ENCODE measurements at regions of chr1 and their contacts with region 1.

Region 1: DNA sequence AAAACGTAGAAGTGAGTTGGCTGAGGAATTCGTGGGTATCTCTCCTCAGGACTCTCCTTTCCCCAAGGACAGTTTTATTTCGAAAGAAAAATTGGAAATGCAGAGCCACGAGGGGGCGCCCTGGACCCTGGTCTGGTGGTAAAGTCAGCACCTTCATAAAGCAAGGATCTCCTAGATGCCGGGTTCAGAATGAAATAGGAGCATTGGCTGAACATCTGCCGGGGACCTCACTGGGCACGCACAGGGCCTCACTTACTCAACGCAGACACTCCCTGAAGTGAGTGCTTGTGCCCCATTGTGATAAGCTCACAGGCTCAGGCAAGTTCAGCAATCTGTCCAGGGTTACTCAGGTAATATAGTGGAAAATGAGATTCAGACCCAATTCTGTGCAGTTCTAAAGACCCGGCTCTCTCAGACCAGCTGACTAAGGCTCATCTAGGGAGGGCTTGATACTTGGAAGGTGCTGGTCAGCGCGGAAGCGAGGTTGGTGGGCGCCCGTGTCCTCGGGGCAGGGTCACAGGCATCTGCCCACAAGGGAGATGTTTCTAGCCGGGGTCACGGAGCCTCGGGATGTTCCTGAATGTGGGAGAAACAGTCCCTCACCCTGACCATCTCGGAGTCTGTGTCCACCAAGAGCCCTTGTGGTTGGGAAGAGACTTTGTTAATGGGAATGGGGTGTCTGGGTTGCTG is 55.7 kb upstream of the ETV3 start:
- DNase-seq: no peak
- H3K4me3 ChIP-seq: no peak overlapping the region
- CTCF ChIP-seq: peak; percentile 75

Region 2: DNA sequence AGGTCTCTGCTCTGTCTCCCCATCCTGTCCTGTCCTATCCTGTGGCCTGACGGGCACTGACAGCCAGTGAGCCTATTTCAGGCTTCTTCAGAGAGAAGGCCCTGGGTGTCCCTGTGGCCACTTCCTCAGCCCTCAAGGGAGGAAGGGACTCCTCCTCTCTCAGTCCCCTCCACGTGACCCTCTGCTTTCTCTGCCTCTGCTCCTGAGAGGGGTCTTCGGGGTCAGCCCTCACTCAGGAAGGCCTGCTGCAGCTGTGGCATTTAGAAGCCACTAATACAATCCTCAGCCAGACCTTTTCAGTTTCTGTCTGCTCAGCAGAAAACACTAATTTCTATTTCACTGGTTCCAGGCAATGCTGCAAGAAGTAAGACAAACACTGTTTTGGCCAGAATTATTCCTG is 12.1 kb before region 1 on chr1:
- CTCF ChIA-PET with region 1: interaction called, 11 read pairs
- POLR2A ChIA-PET with region 1: no interaction called
- DNase-seq: no peak
- H3K4me3 ChIP-seq: no peak overlapping the region
- CTCF ChIP-seq: no peak

Region 3: GRCh38 chr1:157496121-157496526 is 302.3 kb after region 1 on chr1:
- CTCF ChIA-PET with region 1: interaction called, 32 read pairs
- POLR2A ChIA-PET with region 1: no interaction called
- DNase-seq: no peak
- H3K4me3 ChIP-seq: no peak overlapping the region
- CTCF ChIP-seq: peak; percentile 69

Region 4: DNA sequence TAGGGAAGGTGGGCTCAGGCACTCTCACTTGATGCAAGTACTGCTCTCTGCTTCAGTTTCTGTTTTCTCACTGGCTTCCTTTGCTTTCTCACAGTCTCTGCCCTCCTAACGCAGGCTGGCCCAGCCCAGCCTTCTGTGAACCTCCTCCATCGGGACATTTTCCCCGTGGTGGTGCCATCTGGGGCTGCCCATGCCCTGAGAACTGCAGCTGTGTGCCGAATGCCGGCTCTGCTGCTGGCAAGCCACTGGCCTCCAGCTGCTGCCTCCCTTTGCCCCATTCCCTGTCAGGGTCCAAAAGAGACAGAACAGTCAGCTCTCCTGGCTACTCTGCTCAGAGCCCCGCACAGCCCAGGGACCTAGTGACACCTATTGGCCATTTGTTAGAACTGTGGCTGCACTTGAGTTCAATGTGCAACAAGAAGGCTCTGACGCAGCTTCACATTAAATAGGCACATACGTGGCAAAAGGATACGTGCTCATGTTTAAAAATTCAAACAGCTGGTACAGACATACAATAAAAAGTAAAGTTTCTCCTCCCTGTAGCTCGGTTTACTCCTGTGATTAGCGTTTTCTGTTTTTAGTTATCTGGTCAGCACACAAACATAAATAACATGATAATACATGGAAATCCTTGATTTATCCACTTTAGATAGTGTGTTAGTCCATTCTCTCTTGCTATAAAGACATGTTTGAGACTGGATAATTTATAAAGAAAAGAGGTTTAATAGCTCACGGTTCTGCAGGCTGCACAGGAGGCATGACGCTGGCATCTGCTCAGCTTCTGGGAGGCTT is 311.8 kb after region 1 on chr1:
- CTCF ChIA-PET with region 1: interaction called, 23 read pairs
- POLR2A ChIA-PET with region 1: no interaction called
- DNase-seq: peak; percentile 10
- H3K4me3 ChIP-seq: no peak overlapping the region
- CTCF ChIP-seq: peak; percentile 82

Measured in AG04449 (cell line).